Caco-2 (cell line): ENCODE measurements at regions of chr10 and their contacts with region 1.

Region 1: DNA sequence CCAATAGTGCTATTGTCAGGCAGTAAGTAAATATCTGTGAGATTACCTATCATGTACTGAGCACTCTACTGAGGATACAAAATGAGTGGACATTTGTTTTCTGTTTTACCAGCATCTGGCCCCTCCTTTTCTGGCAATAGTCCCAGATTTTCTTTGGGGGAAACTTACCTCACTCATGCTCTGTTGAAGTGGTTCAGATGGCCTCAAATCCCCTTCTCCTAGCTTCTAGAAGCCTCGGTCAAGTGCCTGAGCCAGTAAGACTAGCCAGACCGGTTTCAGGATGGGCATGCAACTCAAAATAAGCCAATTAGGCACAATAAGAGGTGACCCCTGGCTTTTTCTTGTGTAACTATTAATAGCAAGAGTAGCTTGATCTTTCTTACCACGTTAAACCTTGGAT is 19.7 kb downstream of the TRDMT1 start:
- DNase-seq: peak in 1 of 2 experiments; percentile 21
- H3K4me3 ChIP-seq: no peak overlapping the region
- H3K4me3 Mint-ChIP-seq: no peak overlapping the region
- H3K27ac Mint-ChIP-seq: no peak overlapping the region
- H3K4me1 ChIP-seq: peaks cover 11% of the 10 kb centered on the region; the same call in 1 of the 2 replicates
- H3K4me1 Mint-ChIP-seq: no peaks in the 10 kb centered on the region
- H3K27me3 ChIP-seq: no peaks in the 10 kb centered on the region
- H3K27me3 Mint-ChIP-seq: no peaks in the 10 kb centered on the region
- CTCF ChIP-seq: no peak

Region 2: DNA sequence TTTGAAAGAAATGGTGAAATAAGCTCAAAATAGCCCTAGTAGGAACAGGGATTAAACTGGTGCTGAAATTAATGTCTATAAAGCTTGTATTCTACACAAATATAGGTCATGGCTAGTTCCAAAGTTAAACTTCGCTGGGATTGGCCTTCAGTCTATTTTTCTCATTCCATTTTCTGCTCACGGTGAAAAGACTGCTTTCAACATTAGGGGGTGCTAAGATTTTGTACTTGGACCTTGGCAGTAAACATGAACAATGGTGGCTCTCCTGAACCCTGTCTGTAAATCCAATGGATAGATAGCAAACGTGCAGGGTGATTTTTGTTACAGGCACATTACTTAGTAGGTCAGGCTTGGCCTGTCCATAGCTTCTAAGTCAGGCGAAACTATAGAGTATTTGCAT is 328.6 kb before region 1 on chr10:
- CTCF ChIA-PET with region 1: no interaction called
- POLR2A ChIA-PET with region 1: no interaction called
- intact Hi-C with region 1: loop called (anchors 5 kb)
- DNase-seq: peak in 1 of 2 experiments; percentile 12
- H3K4me3 ChIP-seq: no peak overlapping the region
- H3K4me3 Mint-ChIP-seq: no peak overlapping the region
- H3K27ac Mint-ChIP-seq: no peak overlapping the region
- H3K4me1 ChIP-seq: no peaks in the 10 kb centered on the region
- H3K4me1 Mint-ChIP-seq: peaks cover 6% of the 10 kb centered on the region
- H3K27me3 ChIP-seq: no peaks in the 10 kb centered on the region
- H3K27me3 Mint-ChIP-seq: peaks cover 19% of the 10 kb centered on the region
- CTCF ChIP-seq: peak in 1 of 2 experiments; percentile 16

Region 3: GRCh38 chr10:17115683-17116082 is 66.1 kb before region 1 on chr10:
- CTCF ChIA-PET with region 1: no interaction called
- POLR2A ChIA-PET with region 1: no interaction called
- intact Hi-C with region 1: no loop called
- DNase-seq: peak; percentile 86 to 89
- H3K4me3 ChIP-seq: peak overlapping the region; percentile 27
- H3K4me3 Mint-ChIP-seq: peak overlapping the region; percentile 71
- H3K27ac Mint-ChIP-seq: peak overlapping the region; percentile 77
- H3K4me1 ChIP-seq: peaks cover 59% of the 10 kb centered on the region
- H3K4me1 Mint-ChIP-seq: peaks cover 47% of the 10 kb centered on the region
- H3K27me3 ChIP-seq: no peaks in the 10 kb centered on the region
- H3K27me3 Mint-ChIP-seq: no peaks in the 10 kb centered on the region
- CTCF ChIP-seq: peak; percentile 11 to 57